Upper lobe of right lung (tissue), 1 donor: ENCODE measurements at regions of chr5 and their contacts with region 1.

Region 1: DNA sequence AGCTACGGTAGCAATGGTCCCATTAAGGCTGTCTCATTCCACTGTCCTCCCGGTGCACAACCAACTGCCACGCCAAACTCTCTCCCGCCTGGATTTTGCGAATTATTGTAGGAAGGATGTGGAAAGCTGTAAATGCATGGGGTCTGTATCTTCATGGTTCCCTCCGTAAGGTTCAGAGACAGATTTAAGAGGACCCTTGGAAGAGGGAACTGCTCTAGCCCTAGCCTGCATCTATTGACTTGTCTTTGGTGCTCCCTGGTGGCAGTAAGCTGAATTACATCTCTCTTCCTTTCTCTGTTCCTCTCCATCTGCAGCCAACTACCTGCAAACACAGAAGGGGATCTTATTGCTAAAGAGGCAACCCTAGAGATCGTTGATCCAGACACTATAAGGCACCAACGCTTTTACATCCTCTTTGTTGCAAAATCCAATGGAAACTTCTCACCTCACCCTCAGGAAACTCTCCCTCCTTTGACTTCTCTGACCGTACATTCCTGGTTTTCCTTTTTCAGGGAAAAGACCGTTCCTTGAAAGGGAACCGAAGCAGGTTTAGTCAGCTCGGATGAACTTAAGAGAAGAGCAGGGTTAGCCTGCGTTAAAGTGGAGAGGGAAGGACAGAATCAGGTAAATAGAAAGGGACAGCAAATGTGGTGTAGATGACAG is 11.9 kb downstream of the CAPSL start:
- DNase-seq: no peak
- ATAC-seq: peak; percentile 81
- H3K4me3 ChIP-seq: no peak overlapping the region
- H3K27ac ChIP-seq: no peak overlapping the region
- H3K4me1 ChIP-seq: peaks cover 7% of the 10 kb centered on the region
- H3K27me3 ChIP-seq: peaks cover 4% of the 10 kb centered on the region
- CTCF ChIP-seq: peak; percentile 90

Region 2: GRCh38 chr5:35089334-35090314 is 836.9 kb before region 1 on chr5:
- intact Hi-C with region 1: loop called (anchors 10 kb)
- DNase-seq: no peak
- ATAC-seq: peak; percentile 85
- H3K4me3 ChIP-seq: no peak overlapping the region
- H3K27ac ChIP-seq: no peak overlapping the region
- H3K4me1 ChIP-seq: no peaks in the 10 kb centered on the region
- H3K27me3 ChIP-seq: no peaks in the 10 kb centered on the region
- CTCF ChIP-seq: peak; percentile 80

Region 3: GRCh38 chr5:35617435-35618303 is 308.9 kb before region 1 on chr5 and contains the start of gene SPEF2:
- intact Hi-C with region 1: loop called (anchors 10 kb)
- DNase-seq: peak; percentile 89
- ATAC-seq: peak; percentile 100
- H3K4me3 ChIP-seq: peak within 1 kb of the TSS; percentile 80
- H3K27ac ChIP-seq: peak within 1 kb of the TSS; percentile 76
- H3K4me1 ChIP-seq: peaks cover 10% of the 10 kb centered on the region
- H3K27me3 ChIP-seq: no peaks in the 10 kb centered on the region
- CTCF ChIP-seq: peak; percentile 75
- total RNA-seq, gene SPEF2: 9.9 TPM

Region 4: DNA sequence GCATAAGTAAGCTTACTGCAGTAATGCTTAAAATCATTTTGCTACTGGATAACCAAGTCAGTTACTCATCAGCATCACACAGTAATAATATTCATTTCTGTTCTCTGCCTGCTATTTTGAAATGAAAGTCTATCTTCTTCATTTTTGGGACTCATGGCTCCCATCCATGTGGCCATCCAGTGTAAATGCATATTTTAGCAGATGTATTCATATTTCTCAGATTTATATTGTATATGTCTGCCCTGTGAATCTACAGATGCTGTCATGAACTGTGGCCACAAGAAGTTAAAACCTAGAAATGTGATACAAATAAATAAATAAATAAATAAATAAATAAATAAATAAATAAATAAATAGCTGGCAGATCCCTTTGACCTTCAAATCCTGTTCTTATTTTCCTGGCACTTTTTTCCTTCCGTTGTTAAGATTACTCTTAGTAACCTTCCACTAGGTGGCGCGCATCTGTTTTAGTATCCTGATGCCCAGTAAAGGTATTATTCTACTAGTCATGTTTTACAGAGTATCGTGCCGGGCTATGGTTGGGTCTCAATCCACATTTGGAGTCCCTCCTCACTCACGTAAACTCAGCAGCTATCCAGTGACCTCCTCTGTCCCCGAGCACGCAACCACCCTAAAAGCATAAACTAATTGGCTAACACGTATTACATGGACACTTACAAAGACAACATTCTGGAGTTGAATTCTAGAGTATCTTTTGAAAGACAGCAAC is 149.0 kb before region 1 on chr5:
- intact Hi-C with region 1: loop called (anchors 10 kb)
- DNase-seq: no peak
- ATAC-seq: peak; percentile 82
- H3K4me3 ChIP-seq: no peak overlapping the region
- H3K27ac ChIP-seq: no peak overlapping the region
- H3K4me1 ChIP-seq: peaks cover 6% of the 10 kb centered on the region
- H3K27me3 ChIP-seq: no peaks in the 10 kb centered on the region
- CTCF ChIP-seq: peak; percentile 72

Region 5: GRCh38 chr5:36279054-36279698 is 352.7 kb after region 1 on chr5:
- intact Hi-C with region 1: no loop called
- DNase-seq: no peak
- ATAC-seq: no peak
- H3K4me3 ChIP-seq: no peak overlapping the region
- H3K27ac ChIP-seq: peak overlapping the region; percentile 27
- H3K4me1 ChIP-seq: peaks cover 2% of the 10 kb centered on the region
- H3K27me3 ChIP-seq: no peaks in the 10 kb centered on the region
- CTCF ChIP-seq: no peak